ENCODE measurements at regions of chr4 and their contacts with region 1.

Region 1: DNA sequence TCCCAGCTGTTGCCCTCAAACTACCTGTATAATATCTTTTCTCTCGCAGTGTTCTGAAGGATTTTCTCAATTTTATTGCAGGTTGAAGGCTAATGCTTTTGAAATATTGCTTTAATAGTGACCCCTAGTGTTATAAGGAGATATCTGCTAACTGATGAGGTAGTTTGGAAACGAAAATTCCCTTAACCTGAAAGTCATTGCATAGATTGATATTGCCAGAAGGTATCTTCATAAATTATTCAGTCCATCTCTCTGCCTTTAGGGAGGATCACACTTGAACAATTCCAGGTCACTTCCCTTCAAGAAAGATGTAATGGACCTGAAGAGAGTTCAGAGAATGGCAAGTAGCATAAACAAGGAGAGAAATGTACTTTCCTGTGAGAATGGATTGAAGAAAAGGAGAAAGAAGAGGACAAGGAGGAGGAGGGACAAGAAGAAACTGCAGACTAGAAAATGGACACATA is 44.1 kb downstream of the TIGD4 start:
- DNase-seq: peak; percentile 38
- H3K4me3 ChIP-seq: no peak overlapping the region
- H3K27ac ChIP-seq: no peak overlapping the region
- H3K4me1 ChIP-seq: peaks cover 5% of the 10 kb centered on the region
- H3K27me3 ChIP-seq: no peaks in the 10 kb centered on the region
- CTCF ChIP-seq: peak; percentile 64 to 66

Region 2: DNA sequence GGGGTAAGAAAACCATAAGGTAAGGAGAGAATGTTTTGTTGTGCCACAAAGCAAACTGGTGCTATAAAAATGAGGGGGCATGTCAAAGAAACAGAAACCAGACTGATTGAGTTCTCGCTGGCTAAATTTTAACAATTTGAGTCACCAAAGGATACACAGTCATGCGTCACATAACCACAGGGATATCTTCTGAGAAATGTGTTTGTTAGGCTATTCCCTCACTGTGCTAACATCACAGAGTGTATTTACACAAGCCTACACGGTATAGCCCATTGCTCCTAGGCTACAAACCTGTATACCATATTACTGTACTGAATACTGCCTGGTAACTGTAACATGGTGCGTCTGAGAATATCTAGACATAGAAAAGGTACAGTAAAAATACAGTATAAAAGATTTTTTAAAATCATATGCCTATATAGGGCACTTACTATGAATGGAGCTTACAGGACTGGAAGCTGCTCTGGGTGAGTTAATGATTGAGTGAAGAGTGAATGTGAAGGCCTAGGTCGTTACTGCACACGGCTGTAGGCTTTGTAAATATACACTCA is 249.6 kb before region 1 on chr4:
- CTCF ChIA-PET with region 1: no interaction called
- dilution Hi-C with region 1: no loop called
- in situ Hi-C with region 1: loop called in 1 of 2 experiments (anchors 25 kb)
- intact Hi-C with region 1: no loop called
- DNase-seq: peak; percentile 83
- H3K4me3 ChIP-seq: no peak overlapping the region
- H3K27ac ChIP-seq: peak overlapping the region; percentile 33
- H3K4me1 ChIP-seq: peaks cover 10% of the 10 kb centered on the region
- H3K27me3 ChIP-seq: no peaks in the 10 kb centered on the region
- CTCF ChIP-seq: no peak

Region 3: DNA sequence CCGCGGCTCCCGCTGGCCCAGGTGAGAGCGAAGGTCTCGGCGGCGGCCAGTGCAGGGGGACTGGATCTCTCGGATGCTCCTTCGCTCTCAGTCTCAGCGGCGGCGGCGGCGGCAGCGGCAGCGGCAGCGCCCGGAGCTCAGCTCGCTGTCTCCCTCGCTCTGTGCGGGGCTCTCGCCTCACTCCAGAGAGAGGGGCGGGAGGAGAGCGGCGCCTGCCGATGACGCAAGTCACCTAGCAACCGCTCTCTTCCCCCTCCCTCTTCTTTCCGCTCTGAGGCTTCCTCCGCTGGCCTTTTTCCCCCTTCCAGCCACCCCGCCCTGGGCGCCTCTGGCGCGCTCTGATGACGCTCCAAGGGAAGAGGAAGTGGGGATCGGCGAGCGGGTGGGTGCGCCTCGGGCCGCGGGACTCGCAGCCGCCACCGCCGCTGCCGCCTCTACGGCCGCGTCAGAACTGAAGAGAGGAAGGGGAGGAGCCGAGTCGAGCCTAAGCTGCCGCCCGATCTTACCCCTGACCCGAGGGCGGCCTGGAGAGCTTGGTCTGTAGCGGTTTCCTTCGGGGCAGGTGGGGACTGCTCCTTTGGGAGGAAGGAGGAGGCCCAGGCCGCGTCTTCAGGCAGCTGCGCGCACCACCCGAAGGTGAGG is 199.4 kb before region 1 on chr4 and contains the start of gene FBXW7:
- CTCF ChIA-PET with region 1: no interaction called
- dilution Hi-C with region 1: no loop called
- in situ Hi-C with region 1: no loop called
- intact Hi-C with region 1: loop called (anchors 1 kb)
- DNase-seq: peak; percentile 99
- H3K4me3 ChIP-seq: peak within 1 kb of the TSS; percentile 78 to 97 (median 85)
- H3K27ac ChIP-seq: peak within 1 kb of the TSS; percentile 88
- H3K4me1 ChIP-seq: peaks cover 16% of the 10 kb centered on the region
- H3K27me3 ChIP-seq: no peaks in the 10 kb centered on the region
- CTCF ChIP-seq: no peak
- total RNA-seq, gene FBXW7: 42.7 to 109 TPM

Region 4: DNA sequence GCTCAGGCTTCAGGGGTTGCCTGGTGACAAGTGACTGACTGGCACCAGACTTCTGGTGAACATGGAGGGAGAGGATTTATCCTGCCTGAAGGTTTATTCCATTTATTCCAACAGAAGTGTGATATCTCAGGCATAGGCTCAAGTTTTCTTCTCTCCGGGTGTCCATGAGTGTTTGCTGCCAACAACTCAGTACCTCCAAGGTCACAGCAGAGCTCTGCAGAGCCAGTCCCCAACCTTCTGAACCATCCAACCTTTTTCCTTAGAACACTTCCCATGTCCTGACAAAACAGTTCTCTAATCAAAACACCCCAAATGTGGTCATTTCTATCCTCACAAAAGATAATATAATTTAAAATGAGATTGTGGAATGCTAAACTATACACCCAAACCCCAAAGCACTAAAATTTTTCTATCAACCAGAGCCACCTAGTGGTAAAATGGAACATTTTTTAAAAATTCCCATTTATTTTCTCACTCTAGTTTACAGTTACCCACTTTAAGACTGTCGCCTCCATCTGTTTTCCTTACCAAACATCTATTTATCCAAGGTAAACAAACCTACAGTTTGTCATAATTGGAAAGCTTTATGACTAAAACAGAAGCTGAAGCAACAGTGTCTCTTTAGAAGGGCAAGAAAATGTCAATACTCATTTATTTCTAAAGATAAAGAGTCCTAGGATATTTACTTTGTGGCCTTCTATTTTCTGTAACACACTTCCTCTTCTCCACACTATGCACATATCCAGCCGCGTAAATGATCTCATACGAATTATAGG is 95.2 kb before region 1 on chr4:
- CTCF ChIA-PET with region 1: no interaction called
- dilution Hi-C with region 1: loop called (anchors 5 kb)
- in situ Hi-C with region 1: loop called in 1 of 2 experiments (anchors 25 kb)
- intact Hi-C with region 1: loop called (anchors 1 kb)
- DNase-seq: no peak
- H3K4me3 ChIP-seq: no peak overlapping the region
- H3K27ac ChIP-seq: no peak overlapping the region
- H3K4me1 ChIP-seq: peaks cover 2% of the 10 kb centered on the region
- H3K27me3 ChIP-seq: no peaks in the 10 kb centered on the region
- CTCF ChIP-seq: peak; percentile 41 to 56